T-cell (primary cell): ENCODE measurements at regions of chr6 and their contacts with region 1.

Region 1: GRCh38 chr6:156916130-156916801 is 139.1 kb downstream of the ARID1B start:
- DNase-seq: no peak
- ATAC-seq: peak in 1 of 4 experiments; percentile 51
- H3K4me3 ChIP-seq: no peak overlapping the region
- H3K4me3 Mint-ChIP-seq: peak overlapping the region in 2 of 3 donors; percentile 2 to 10
- H3K27ac ChIP-seq: no peak overlapping the region
- H3K27ac Mint-ChIP-seq: peak overlapping the region; percentile 24 to 25
- H3K4me1 ChIP-seq: peaks cover 16 to 35% of the 10 kb centered on the region in 2 experiments
- H3K4me1 Mint-ChIP-seq: peaks cover 73 to 88% (median 76%) of the 10 kb centered on the region in 3 donors
- H3K27me3 ChIP-seq: no peaks in the 10 kb centered on the region
- H3K27me3 Mint-ChIP-seq: no peaks in the 10 kb centered on the region

Region 2: GRCh38 chr6:156953479-156954146 is 37.3 kb after region 1 on chr6:
- CTCF ChIA-PET with region 1: no interaction called
- POLR2A ChIA-PET with region 1: interaction called in 1 of 2 experiments, 14 read pairs
- DNase-seq: peak in 33 of 35 experiments; percentile 11 to 84 (median 47)
- ATAC-seq: peak; percentile 77 to 100 (median 86)
- H3K4me3 ChIP-seq: no peak overlapping the region
- H3K4me3 Mint-ChIP-seq: peak overlapping the region in 1 of 3 donors; percentile 9
- H3K27ac ChIP-seq: no peak overlapping the region
- H3K27ac Mint-ChIP-seq: peak overlapping the region in 1 of 2 donors; percentile 21
- H3K4me1 ChIP-seq: peaks cover 2 to 17% of the 10 kb centered on the region in 2 experiments
- H3K4me1 Mint-ChIP-seq: peaks cover 76 to 80% (median 79%) of the 10 kb centered on the region in 3 donors
- H3K27me3 ChIP-seq: no peaks in the 10 kb centered on the region
- H3K27me3 Mint-ChIP-seq: no peaks in the 10 kb centered on the region